Mammary epithelial cell (primary cell): ENCODE measurements at regions of chr6 and their contacts with region 1.

Region 1: DNA sequence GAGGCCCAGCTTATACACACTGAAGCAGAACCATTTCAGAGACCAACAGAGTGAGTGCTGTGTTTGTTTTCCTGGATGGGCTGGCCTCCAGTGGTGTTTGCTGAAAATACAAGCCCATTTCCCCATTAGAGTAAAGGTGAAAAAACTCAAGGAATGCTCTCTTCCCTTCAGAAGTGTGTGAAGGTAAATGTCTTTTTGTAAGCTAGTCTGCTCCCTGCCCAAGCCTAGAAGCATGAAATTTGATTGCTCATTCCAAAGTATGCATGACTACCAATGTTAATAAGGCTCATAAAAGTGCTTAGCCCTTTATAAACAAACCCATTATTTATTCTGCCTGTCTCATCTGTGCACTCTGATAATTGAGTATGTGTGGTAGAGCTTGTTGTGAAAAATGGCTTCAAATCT is 59.1 kb downstream of the ADGRF1 start:
- DNase-seq: peak; percentile 85
- H3K4me3 ChIP-seq: no peak overlapping the region
- H3K27ac ChIP-seq: peak overlapping the region; percentile 67
- H3K4me1 ChIP-seq: peaks cover 34% of the 10 kb centered on the region
- H3K27me3 ChIP-seq: no peaks in the 10 kb centered on the region
- CTCF ChIP-seq: peak; percentile 9 to 18

Region 2: DNA sequence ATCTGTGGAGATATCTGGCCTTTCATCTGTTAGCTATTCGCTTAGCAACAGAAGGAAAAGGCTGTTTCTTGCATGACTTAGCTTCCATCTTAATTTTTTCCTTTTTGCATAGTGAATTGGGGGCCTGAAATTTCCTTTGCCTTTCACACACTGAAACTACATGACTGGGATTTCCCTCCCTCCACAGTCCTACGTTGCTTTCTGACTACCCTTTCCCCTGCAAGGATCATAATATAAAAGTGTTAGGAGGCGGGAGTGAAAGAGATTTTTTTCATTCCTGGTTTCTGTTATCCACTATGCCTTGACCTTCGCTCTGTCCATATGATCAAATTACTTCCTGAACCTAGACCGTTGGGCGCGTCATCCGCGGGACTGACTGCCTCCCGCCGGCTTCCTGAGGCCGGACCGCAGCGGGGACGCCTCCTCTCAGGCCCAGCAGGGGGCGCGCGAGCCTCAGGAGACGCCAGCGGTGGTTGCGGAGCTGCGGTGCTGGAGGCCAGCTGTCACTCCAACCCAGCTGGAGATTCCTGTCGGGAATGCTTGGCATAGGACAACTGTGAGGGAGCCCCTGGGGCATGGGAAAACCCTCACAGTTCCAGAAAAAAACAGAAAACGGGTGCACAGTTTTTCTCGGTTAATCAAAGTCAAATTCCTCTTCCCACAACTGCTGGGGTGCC is 134.2 kb before region 1 on chr6:
- CTCF ChIA-PET with region 1: interaction called, 22 read pairs
- dilution Hi-C with region 1: no loop called
- in situ Hi-C with region 1: loop called in 1 of 2 experiments (anchors 10 kb)
- intact Hi-C with region 1: loop called (anchors 2 kb)
- DNase-seq: peak; percentile 73
- H3K4me3 ChIP-seq: no peak overlapping the region
- H3K27ac ChIP-seq: no peak overlapping the region
- H3K4me1 ChIP-seq: peaks cover 15% of the 10 kb centered on the region
- H3K27me3 ChIP-seq: no peaks in the 10 kb centered on the region
- CTCF ChIP-seq: peak; percentile 69 to 96

Region 3: GRCh38 chr6:46891252-46891795 is 91.7 kb before region 1 on chr6:
- CTCF ChIA-PET with region 1: no interaction called
- dilution Hi-C with region 1: no loop called
- in situ Hi-C with region 1: no loop called
- intact Hi-C with region 1: loop called (anchors 1 kb)
- DNase-seq: no peak
- H3K4me3 ChIP-seq: no peak overlapping the region
- H3K27ac ChIP-seq: no peak overlapping the region
- H3K4me1 ChIP-seq: no peaks in the 10 kb centered on the region
- H3K27me3 ChIP-seq: no peaks in the 10 kb centered on the region
- CTCF ChIP-seq: no peak

Region 4: DNA sequence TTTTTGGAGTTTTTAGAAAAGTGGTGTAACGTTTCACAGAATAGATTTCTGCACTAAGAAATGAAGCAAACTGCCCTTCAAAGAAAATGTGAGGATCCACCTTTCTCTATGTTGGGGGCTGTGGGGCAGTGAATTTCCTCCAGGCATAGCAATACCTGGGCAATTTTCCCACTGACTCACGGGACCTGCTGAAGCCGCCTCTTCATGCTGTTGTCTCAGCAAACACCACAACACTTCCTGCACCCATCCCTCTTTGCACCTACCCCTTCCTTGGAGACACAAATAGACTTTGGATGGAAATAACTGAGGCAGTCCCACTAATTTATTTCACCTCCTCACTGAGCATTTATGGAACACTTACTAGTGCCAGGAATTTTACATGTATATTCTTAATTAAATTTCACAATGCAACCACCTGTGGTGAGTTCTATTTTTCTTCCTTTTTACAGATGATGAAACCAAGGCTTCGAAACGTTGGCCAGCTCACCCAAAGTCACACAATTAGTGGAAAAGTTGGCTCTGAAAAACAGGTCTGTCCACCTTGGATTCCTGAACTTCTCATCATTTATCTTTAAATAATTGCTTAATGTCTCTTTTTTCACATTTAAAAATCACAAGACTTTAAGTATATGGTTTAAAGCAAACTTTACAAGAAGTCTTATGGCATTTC is 76.3 kb after region 1 on chr6:
- CTCF ChIA-PET with region 1: no interaction called
- dilution Hi-C with region 1: no loop called
- in situ Hi-C with region 1: no loop called
- intact Hi-C with region 1: no loop called
- DNase-seq: peak; percentile 87
- H3K4me3 ChIP-seq: no peak overlapping the region
- H3K27ac ChIP-seq: peak overlapping the region; percentile 76
- H3K4me1 ChIP-seq: peaks cover 52% of the 10 kb centered on the region
- H3K27me3 ChIP-seq: no peaks in the 10 kb centered on the region
- CTCF ChIP-seq: no peak

Region 5: GRCh38 chr6:47581591-47581990 is 598.6 kb after region 1 on chr6:
- CTCF ChIA-PET with region 1: no interaction called
- dilution Hi-C with region 1: no loop called
- in situ Hi-C with region 1: no loop called
- intact Hi-C with region 1: no loop called
- DNase-seq: no peak
- H3K4me3 ChIP-seq: no peak overlapping the region
- H3K27ac ChIP-seq: no peak overlapping the region
- H3K4me1 ChIP-seq: no peaks in the 10 kb centered on the region
- H3K27me3 ChIP-seq: no peaks in the 10 kb centered on the region
- CTCF ChIP-seq: no peak